Activated CD4-positive, alpha-beta T cell treated with anti-CD3 and anti-CD28 coated beads for 36 hours (primary cell): ENCODE measurements at regions of chr19 and their contacts with region 1.

Region 1: GRCh38 chr19:41821003-41821735 is 23.3 kb downstream of the LYPD4 start:
- DNase-seq: peak; percentile 67
- ATAC-seq: peak; percentile 90
- H3K4me3 Mint-ChIP-seq: no peak overlapping the region
- H3K27ac Mint-ChIP-seq: no peak overlapping the region
- H3K4me1 Mint-ChIP-seq: no peaks in the 10 kb centered on the region
- H3K27me3 Mint-ChIP-seq: peaks cover 10% of the 10 kb centered on the region

Region 2: GRCh38 chr19:41499899-41500298 is 321.3 kb before region 1 on chr19:
- CTCF ChIA-PET with region 1: no interaction called
- POLR2A ChIA-PET with region 1: no interaction called
- intact Hi-C with region 1: loop called in 1 of 2 experiments (anchors 10 kb)
- DNase-seq: no peak
- ATAC-seq: no peak
- H3K4me3 Mint-ChIP-seq: no peak overlapping the region
- H3K27ac Mint-ChIP-seq: no peak overlapping the region
- H3K4me1 Mint-ChIP-seq: peaks cover 3% of the 10 kb centered on the region
- H3K27me3 Mint-ChIP-seq: peaks cover 20% of the 10 kb centered on the region